Keratinocyte (primary cell): ENCODE measurements at regions of chr11 and their contacts with region 1.

Region 1: DNA sequence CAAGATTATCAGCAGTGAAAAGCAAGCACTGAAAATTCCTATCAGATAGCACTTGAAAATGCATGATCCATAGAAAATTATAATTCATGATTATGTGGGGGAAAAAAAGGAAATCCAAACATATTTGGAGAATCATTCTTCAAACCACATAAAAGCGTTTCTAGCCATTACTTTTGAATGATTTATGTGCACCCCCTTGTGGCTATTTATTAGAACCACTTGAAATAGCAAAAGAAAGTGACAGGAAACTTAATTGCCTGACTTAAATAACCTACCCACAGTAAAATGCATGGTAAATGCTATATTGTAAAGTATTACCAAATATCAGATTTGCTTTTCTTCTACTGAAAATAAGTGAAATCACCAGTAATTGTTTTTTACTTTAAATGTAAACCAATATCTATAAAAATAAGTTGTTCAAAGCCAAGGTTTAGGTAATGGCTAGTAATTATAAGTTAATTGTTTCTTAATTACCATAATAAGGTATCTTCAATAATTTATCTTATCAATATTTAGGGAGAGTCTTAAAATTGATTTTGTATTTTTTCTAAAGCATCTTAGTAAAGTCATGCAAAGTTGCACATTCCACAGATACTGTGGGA is 168.5 kb downstream of the ARHGAP42 start:
- DNase-seq: no peak
- H3K4me3 ChIP-seq: no peak overlapping the region
- H3K27ac ChIP-seq: no peak overlapping the region
- H3K4me1 ChIP-seq: peaks cover 10% of the 10 kb centered on the region
- H3K27me3 ChIP-seq: no peaks in the 10 kb centered on the region
- CTCF ChIP-seq: peak in 2 of 3 experiments; percentile 37 to 41

Region 2: GRCh38 chr11:100575870-100576705 is 279.5 kb before region 1 on chr11:
- dilution Hi-C with region 1: loop called (anchors 25 kb)
- DNase-seq: no peak
- H3K4me3 ChIP-seq: no peak overlapping the region
- H3K27ac ChIP-seq: no peak overlapping the region
- H3K4me1 ChIP-seq: peaks cover 11% of the 10 kb centered on the region
- H3K27me3 ChIP-seq: no peaks in the 10 kb centered on the region
- CTCF ChIP-seq: peak in 2 of 3 experiments; percentile 56 to 60

Region 3: DNA sequence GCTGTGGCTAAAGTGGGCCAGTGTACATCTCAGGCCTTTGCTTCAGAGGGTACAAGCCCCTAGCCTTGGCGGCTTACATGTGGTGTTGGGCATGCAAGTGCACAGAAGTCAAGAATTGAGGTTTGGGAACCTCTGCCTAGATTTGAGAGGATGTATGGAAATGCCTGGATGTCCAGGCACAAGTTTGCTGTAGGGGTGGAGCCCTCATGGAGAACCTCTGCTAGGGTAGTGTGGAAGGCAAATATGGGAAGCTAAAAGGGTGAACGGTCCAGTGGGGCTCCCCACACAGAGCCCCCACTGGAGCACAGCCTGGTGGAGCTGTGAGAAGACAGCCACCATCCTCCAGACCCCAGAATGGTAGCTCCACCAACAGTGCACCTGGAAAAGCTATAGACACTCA is 302.6 kb after region 1 on chr11:
- dilution Hi-C with region 1: no loop called
- DNase-seq: no peak
- H3K4me3 ChIP-seq: no peak overlapping the region
- H3K27ac ChIP-seq: no peak overlapping the region
- H3K4me1 ChIP-seq: no peaks in the 10 kb centered on the region
- H3K27me3 ChIP-seq: no peaks in the 10 kb centered on the region
- CTCF ChIP-seq: no peak